Endothelial cell of umbilical vein (primary cell): ENCODE measurements at regions of chr12 and their contacts with region 1.

Region 1: GRCh38 chr12:66301944-66302826 is at the start of gene HELB:
- DNase-seq: peak; percentile 95
- H3K4me3 ChIP-seq: peak within 1 kb of the TSS; percentile 77 to 86 (median 78)
- H3K27ac ChIP-seq: peak within 1 kb of the TSS; percentile 29
- H3K4me1 ChIP-seq: no peaks in the 10 kb centered on the region
- H3K27me3 ChIP-seq: peaks cover 14 to 22% of the 10 kb centered on the region in 2 experiments
- CTCF ChIP-seq: no peak
- POLR2A ChIP-seq: peak; percentile 67
- total RNA-seq, gene HELB: 3.4 and 4.0 TPM in 2 replicates

Region 2: DNA sequence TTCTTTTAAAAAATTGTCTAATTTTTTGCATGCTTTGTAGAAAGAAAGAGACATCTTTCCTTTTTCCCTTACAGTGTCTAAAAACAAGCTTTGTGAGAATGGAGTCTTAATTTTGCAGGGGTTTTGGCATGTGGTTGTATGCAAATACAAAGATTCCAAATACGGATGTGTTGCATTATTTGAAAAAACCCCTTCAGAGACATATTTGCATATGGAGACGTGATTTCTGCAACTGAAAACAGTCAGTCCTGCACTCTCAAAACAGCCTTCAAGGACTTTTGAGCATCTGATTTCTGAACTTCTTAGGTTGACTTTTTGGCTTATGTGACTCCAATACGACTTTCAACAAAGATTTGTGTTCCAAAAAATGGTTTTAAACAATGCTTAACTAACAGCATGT is 105.4 kb before region 1 on chr12:
- CTCF ChIA-PET with region 1: no interaction called
- POLR2A ChIA-PET with region 1: no interaction called
- dilution Hi-C with region 1: no loop called
- intact Hi-C with region 1: loop called (anchors 5 kb)
- DNase-seq: no peak
- H3K4me3 ChIP-seq: no peak overlapping the region
- H3K27ac ChIP-seq: no peak overlapping the region
- H3K4me1 ChIP-seq: peaks cover 19% of the 10 kb centered on the region
- H3K27me3 ChIP-seq: no peaks in the 10 kb centered on the region
- CTCF ChIP-seq: no peak
- POLR2A ChIP-seq: no peak

Region 3: GRCh38 chr12:66269757-66270383 is 32.3 kb before region 1 on chr12:
- CTCF ChIA-PET with region 1: interaction called, 11 read pairs
- POLR2A ChIA-PET with region 1: no interaction called
- dilution Hi-C with region 1: no loop called
- intact Hi-C with region 1: no loop called
- DNase-seq: peak; percentile 34
- H3K4me3 ChIP-seq: no peak overlapping the region
- H3K27ac ChIP-seq: no peak overlapping the region
- H3K4me1 ChIP-seq: no peaks in the 10 kb centered on the region
- H3K27me3 ChIP-seq: peaks cover 0 to 4% of the 10 kb centered on the region in 2 experiments
- CTCF ChIP-seq: peak; percentile 56 to 58
- POLR2A ChIP-seq: no peak

Region 4: GRCh38 chr12:66279123-66279712 is 23.0 kb before region 1 on chr12:
- CTCF ChIA-PET with region 1: interaction called, 14 read pairs
- POLR2A ChIA-PET with region 1: no interaction called
- dilution Hi-C with region 1: no loop called
- intact Hi-C with region 1: no loop called
- DNase-seq: peak; percentile 48
- H3K4me3 ChIP-seq: no peak overlapping the region
- H3K27ac ChIP-seq: no peak overlapping the region
- H3K4me1 ChIP-seq: peaks cover 2% of the 10 kb centered on the region
- H3K27me3 ChIP-seq: no peaks in the 10 kb centered on the region
- CTCF ChIP-seq: peak; percentile 63 to 69
- POLR2A ChIP-seq: no peak

Region 5: DNA sequence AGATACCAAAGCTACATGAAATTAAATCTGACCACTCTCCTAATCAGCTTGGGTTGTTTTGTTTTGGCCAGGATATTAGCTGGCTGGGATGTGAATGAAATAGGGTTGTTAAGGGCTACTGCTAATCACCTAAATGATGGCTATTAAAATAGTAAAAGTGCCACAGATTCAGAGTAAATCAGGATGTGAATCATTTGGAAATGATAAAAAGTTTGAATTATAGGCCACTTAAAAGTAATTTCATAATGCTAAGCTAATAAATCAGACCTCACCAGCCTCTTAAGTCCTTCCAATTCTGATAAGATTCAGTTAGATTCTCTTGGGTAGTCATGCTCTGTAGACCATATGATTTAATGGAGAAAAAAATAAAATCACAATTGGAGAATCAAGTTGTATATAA is 12.1 kb after region 1 on chr12:
- CTCF ChIA-PET with region 1: interaction called, 11 read pairs
- POLR2A ChIA-PET with region 1: no interaction called
- dilution Hi-C with region 1: no loop called
- intact Hi-C with region 1: no loop called
- DNase-seq: no peak
- H3K4me3 ChIP-seq: no peak overlapping the region
- H3K27ac ChIP-seq: no peak overlapping the region
- H3K4me1 ChIP-seq: no peaks in the 10 kb centered on the region
- H3K27me3 ChIP-seq: no peaks in the 10 kb centered on the region
- CTCF ChIP-seq: no peak
- POLR2A ChIP-seq: no peak

Region 6: DNA sequence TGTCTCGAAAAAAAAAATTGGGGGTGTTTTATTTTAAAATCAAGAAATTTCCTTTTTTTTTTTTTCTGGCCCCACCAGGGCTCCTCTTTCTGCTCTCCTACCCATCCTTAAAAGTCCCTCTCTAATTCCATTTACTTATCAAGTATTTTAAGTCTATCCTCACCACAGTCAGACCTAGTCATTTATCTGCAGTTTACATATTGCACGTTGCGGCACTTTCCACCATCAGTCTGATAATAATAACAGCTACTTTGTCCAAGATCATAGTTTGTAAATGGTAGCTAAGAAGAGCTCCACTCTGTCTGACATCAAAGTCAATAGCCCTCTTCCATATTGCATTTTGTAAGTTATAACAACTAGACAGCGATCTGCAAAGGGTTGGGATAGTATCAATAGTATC is 943.4 kb after region 1 on chr12:
- CTCF ChIA-PET with region 1: no interaction called
- POLR2A ChIA-PET with region 1: no interaction called
- dilution Hi-C with region 1: no loop called
- intact Hi-C with region 1: no loop called
- DNase-seq: no peak
- H3K4me3 ChIP-seq: no peak overlapping the region
- H3K27ac ChIP-seq: no peak overlapping the region
- H3K4me1 ChIP-seq: no peaks in the 10 kb centered on the region
- H3K27me3 ChIP-seq: no peaks in the 10 kb centered on the region
- CTCF ChIP-seq: no peak
- POLR2A ChIP-seq: no peak